ENCODE measurements at regions of chr10 and their contacts with region 1.

Region 1: DNA sequence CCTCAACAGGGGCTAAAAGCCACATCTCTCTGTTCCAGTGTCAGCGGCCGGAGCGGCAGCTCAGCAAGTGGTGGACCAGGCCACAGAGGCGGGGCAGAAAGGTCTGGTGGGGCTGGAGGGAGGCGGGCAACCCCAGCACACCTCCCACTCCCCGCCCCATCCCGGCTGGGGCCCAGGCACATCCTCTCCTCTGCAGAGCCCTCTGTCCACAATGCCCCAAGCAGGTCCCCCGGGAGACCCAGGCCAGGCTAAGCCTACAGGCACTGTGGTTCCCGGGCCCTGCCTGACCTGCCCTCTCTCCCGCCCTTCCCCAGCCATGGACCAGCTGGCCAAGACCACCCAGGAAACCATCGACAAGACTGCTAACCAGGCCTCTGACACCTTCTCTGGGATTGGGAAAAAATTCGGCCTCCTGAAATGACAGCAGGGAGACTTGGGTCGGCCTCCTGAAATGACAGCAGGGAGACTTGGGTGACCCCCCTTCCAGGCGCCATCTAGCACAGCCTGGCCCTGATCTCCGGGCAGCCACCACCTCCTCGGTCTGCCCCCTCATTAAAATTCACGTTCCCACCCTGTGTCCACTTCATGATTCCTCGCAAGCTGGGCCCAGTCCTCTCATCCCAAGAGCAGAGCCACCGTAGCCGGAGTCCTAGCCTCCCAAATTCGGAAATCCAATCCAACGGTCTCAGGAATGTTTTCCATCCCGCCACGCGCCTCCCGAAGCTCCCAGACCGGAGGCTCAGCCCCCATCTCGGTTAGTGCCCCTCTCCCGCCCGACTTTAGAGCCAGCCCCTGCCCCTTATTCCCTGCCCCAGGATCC is 2.1 kb downstream of the ADIRF start:
- DNase-seq: no peak
- H3K4me3 ChIP-seq: peak overlapping the region; percentile 70
- H3K27ac ChIP-seq: peak overlapping the region; percentile 97
- H3K27me3 ChIP-seq: no peaks in the 10 kb centered on the region
- CTCF ChIP-seq: no peak

Region 2: GRCh38 chr10:86942443-86943075 is 27.8 kb before region 1 on chr10:
- CTCF ChIA-PET with region 1: interaction called, 17 read pairs
- POLR2A ChIA-PET with region 1: interaction called, 4 read pairs
- DNase-seq: no peak
- H3K4me3 ChIP-seq: no peak overlapping the region
- H3K27ac ChIP-seq: no peak overlapping the region
- H3K27me3 ChIP-seq: peaks cover 11% of the 10 kb centered on the region
- CTCF ChIP-seq: no peak

Measured in AG04450 (cell line).